H1 (cell line): ENCODE measurements at regions of chr7 and their contacts with region 1.

Region 1: GRCh38 chr7:71155236-71155635 is 23.3 kb downstream of the GALNT17 start:
- DNase-seq: no peak
- H3K4me3 ChIP-seq: no peak overlapping the region
- H3K27ac ChIP-seq: no peak overlapping the region
- H3K4me1 ChIP-seq: no peaks in the 10 kb centered on the region
- H3K27me3 ChIP-seq: no peaks in the 10 kb centered on the region
- CTCF ChIP-seq: no peak
- EP300 ChIP-seq: no peak
- POLR2A ChIP-seq: no peak
- RAD21 ChIP-seq: no peak

Region 2: GRCh38 chr7:71165708-71166107 is 10.5 kb after region 1 on chr7:
- CTCF ChIA-PET with region 1: interaction called, 22 read pairs
- POLR2A ChIA-PET with region 1: interaction called, 3 read pairs
- DNase-seq: no peak
- H3K4me3 ChIP-seq: no peak overlapping the region
- H3K27ac ChIP-seq: no peak overlapping the region
- H3K4me1 ChIP-seq: no peaks in the 10 kb centered on the region; a peak in 1 of 7 replicates
- H3K27me3 ChIP-seq: no peaks in the 10 kb centered on the region
- CTCF ChIP-seq: peak; percentile 14 to 72 (median 44)
- EP300 ChIP-seq: no peak
- POLR2A ChIP-seq: no peak
- RAD21 ChIP-seq: peak; percentile 42 to 47

Region 3: GRCh38 chr7:71403202-71403946 is 248.1 kb after region 1 on chr7:
- CTCF ChIA-PET with region 1: no interaction called
- POLR2A ChIA-PET with region 1: no interaction called
- DNase-seq: no peak
- H3K4me3 ChIP-seq: no peak overlapping the region
- H3K27ac ChIP-seq: no peak overlapping the region
- H3K4me1 ChIP-seq: peaks cover 0 to 6% (median 2%) of the 10 kb centered on the region in 4 experiments; a peak in 3 of 7 replicates
- H3K27me3 ChIP-seq: no peaks in the 10 kb centered on the region
- CTCF ChIP-seq: no peak
- EP300 ChIP-seq: no peak
- POLR2A ChIP-seq: no peak
- RAD21 ChIP-seq: no peak